ENCODE measurements at regions of chr6 and their contacts with region 1.

Region 1: DNA sequence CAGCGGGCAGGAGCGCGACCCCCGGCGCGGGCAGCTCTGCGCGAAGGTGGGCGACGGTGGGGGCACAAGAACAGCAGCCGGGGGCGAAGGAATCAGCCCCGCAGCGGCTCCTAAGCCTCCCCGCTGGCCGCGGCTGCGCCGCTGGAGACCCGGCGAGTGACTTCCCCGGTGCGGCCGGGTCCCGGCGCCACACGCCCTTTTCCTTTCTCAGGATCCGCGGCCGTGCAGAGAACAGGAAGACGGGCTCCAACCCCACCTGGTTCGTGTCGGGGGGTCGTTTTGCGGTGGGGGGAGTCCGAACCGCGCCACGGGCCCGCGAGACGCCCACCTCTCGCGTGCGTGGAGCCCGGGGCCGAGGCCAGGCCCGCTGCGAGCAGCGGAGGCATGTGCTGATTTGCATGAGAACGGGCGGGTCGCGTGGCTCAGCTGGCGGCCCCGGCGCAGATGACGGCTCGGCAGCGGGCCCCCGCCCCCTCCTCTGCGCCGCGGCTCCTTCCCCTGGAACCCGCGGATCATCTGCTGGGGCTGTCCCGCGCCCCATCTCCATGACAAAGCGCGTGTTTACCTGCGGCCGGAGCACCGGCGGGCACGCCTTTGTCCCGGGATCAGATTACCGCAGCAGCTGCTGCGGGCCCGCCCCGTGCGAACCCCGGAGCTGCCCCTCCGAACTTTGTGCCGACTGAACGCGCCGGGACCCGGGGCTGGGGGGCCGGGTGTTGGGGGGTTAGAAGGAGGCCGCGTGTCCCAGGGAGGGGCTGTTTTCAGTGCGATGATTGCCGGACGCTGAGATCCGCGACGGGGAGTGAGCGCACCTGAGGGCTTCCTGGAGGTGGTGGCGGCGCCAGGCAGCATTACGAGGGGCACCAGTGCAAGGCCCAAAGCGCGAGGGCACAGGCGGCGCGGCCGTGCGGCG is 4.9 kb upstream of the DLL1 start:
- DNase-seq: peak; percentile 21
- H3K4me3 ChIP-seq: peak overlapping the region; percentile 14 to 36 (median 34)
- H3K27ac ChIP-seq: no peak overlapping the region
- H3K4me1 ChIP-seq: peaks cover 17% of the 10 kb centered on the region
- H3K27me3 ChIP-seq: peaks cover 29 to 62% of the 10 kb centered on the region in 2 experiments
- CTCF ChIP-seq: no peak
- POLR2A ChIP-seq: no peak

Region 2: GRCh38 chr6:169959136-169960002 is 336.4 kb before region 1 on chr6:
- CTCF ChIA-PET with region 1: no interaction called
- POLR2A ChIA-PET with region 1: no interaction called
- dilution Hi-C with region 1: no loop called
- intact Hi-C with region 1: loop called (anchors 5 kb)
- DNase-seq: peak; percentile 26
- H3K4me3 ChIP-seq: no peak overlapping the region
- H3K27ac ChIP-seq: no peak overlapping the region
- H3K4me1 ChIP-seq: peaks cover 4% of the 10 kb centered on the region
- H3K27me3 ChIP-seq: peaks cover 0 to 3% of the 10 kb centered on the region in 2 experiments
- CTCF ChIP-seq: peak in 1 of 2 donors; percentile 10
- POLR2A ChIP-seq: no peak

Region 3: DNA sequence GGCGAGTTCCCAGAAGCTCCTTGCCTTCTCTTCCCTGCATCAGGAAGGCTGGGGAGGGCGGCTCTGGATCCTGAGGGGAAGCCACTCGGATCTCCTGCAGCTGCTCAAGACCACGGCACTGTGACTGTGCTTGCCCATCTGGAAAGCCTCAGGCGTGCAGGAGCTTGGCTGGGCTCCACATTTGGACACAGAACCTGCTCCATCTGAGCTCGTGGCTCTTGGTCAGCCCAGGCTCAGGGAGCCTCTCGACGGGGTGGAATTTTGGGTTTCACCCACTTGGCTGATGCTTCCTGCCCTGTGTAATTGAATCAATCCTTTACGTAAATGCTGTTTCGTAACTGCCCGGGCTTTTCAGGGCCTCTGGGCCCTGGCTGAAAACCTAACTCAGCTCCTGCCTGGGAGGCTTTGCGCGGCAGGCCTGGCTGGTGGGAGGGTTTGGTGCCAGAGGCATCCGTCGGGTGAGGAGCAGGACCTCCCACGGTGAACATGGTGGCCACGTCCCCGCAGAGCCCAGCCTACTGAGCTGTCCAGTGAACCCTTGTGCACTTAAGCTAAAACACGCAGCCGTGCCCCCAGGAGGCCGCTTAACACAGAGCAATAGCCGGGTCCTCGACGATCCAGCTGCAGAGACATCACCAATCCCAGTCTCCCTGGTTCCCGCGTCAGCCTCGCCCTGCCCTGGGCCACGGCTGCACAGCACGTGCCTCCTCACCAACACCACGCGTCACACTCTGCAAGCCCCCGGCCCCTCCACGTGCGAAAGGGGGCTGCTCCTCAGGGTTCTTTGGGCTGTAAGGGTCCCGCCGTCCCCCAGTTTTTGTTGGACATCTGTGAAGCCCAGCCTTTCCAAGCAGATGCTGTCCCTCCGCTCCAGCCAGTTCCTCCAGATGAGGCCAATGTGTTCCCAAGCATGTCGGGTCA is 245.9 kb before region 1 on chr6:
- CTCF ChIA-PET with region 1: no interaction called
- POLR2A ChIA-PET with region 1: no interaction called
- dilution Hi-C with region 1: no loop called
- intact Hi-C with region 1: no loop called
- DNase-seq: no peak
- H3K4me3 ChIP-seq: no peak overlapping the region
- H3K27ac ChIP-seq: no peak overlapping the region
- H3K4me1 ChIP-seq: no peaks in the 10 kb centered on the region
- H3K27me3 ChIP-seq: no peaks in the 10 kb centered on the region
- CTCF ChIP-seq: no peak
- POLR2A ChIP-seq: no peak

Region 4: DNA sequence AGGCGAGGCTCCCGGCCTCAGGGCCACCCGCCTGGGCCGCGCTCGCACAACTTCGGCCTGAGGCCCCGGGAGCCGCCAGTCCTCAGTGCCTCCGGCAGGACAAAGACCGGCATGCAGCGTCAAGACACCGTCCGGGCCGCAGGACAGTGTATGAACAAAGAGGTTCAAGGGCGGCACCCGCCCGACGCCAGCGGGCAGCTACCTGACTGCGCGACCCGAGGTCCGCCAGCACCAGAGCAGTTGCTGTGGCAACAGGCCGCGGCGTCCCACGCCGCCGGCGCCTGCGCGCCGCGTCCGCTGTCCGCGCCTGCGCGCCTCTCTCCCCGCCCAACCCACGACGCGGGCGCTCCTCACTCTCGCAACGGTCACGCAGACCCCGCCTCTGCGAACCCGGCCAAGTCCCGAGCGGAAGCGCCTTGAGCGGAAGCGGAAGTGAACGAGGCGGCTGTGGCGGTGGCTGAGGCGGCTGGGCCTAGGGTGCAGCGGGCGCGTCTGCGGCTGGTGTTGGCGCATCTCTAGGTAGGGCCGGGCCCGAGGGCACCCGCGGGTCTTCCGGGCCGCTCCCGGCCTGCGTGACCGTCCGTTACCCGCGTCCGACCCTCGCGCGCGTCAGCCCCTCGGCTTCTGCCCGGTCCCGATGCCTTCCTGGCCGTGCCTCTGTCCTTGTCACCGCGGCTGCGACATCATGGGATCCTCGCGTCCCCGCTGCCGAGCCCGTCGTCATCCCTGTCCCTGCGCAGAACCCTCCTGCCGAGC is 10.7 kb after region 1 on chr6 and contains the start of gene FAM120B:
- CTCF ChIA-PET with region 1: interaction called, 3 read pairs
- POLR2A ChIA-PET with region 1: no interaction called
- dilution Hi-C with region 1: no loop called
- intact Hi-C with region 1: loop called (anchors 2 kb)
- DNase-seq: peak; percentile 96
- H3K4me3 ChIP-seq: peak within 1 kb of the TSS; percentile 48 to 86 (median 78)
- H3K27ac ChIP-seq: peak within 1 kb of the TSS; percentile 73
- H3K4me1 ChIP-seq: peaks cover 11% of the 10 kb centered on the region
- H3K27me3 ChIP-seq: no peaks in the 10 kb centered on the region
- CTCF ChIP-seq: no peak
- POLR2A ChIP-seq: peak; percentile 97
- total RNA-seq, gene FAM120B: 28.1 and 28.2 TPM in 2 replicates

Measured in endothelial cell of umbilical vein (primary cell).